ENCODE measurements at regions of chr11 and their contacts with region 1.

Region 1: GRCh38 chr11:61102667-61103571 is 630 bp downstream of the CD5 start:
- DNase-seq: no peak
- ATAC-seq: peak; percentile 27
- H3K4me3 Mint-ChIP-seq: no peak overlapping the region
- H3K27ac Mint-ChIP-seq: no peak overlapping the region
- H3K4me1 Mint-ChIP-seq: peaks cover 37% of the 10 kb centered on the region
- H3K27me3 Mint-ChIP-seq: no peaks in the 10 kb centered on the region

Region 2: GRCh38 chr11:61091373-61092279 is 11.3 kb before region 1 on chr11:
- POLR2A ChIA-PET with region 1: interaction called, 23 read pairs
- DNase-seq: peak; percentile 49
- ATAC-seq: peak; percentile 46
- H3K4me3 Mint-ChIP-seq: peak overlapping the region; percentile 84
- H3K27ac Mint-ChIP-seq: peak overlapping the region; percentile 94
- H3K4me1 Mint-ChIP-seq: peaks cover 62% of the 10 kb centered on the region
- H3K27me3 Mint-ChIP-seq: no peaks in the 10 kb centered on the region

Region 3: DNA sequence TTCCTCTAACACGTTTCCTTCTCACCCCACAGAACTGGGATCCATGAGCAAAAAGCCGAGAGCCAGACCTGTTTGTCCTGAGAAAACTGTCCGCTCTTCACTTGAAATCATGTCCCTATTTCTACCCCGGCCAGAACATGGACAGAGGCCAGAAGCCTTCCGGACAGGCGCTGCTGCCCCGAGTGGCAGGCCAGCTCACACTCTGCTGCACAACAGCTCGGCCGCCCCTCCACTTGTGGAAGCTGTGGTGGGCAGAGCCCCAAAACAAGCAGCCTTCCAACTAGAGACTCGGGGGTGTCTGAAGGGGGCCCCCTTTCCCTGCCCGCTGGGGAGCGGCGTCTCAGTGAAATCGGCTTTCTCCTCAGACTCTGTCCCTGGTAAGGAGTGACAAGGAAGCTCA is 23.3 kb after region 1 on chr11:
- POLR2A ChIA-PET with region 1: no interaction called
- DNase-seq: no peak
- ATAC-seq: no peak
- H3K4me3 Mint-ChIP-seq: no peak overlapping the region
- H3K27ac Mint-ChIP-seq: no peak overlapping the region
- H3K4me1 Mint-ChIP-seq: peaks cover 37% of the 10 kb centered on the region
- H3K27me3 Mint-ChIP-seq: no peaks in the 10 kb centered on the region

Region 4: DNA sequence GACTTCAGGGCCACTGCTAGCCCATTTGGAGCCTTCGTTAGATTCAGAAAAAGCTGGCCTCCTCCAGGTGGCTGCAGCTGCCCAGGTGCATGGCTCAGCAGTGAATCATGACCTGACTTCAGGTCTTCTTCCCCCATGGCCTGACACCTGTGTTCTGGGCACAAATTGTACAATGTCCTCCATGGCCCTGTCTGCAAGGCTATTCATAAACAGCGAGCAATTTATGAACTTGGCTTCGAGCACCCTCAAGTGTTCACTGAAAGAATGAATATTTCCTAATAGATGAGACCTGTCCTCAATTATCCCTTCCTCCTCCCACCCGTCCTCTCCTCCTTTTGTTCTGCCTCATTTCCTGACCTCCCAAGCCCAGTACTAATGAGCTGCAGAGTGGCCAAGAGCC is 70.5 kb after region 1 on chr11:
- POLR2A ChIA-PET with region 1: no interaction called
- DNase-seq: no peak
- ATAC-seq: no peak
- H3K4me3 Mint-ChIP-seq: no peak overlapping the region
- H3K27ac Mint-ChIP-seq: no peak overlapping the region
- H3K4me1 Mint-ChIP-seq: peaks cover 12% of the 10 kb centered on the region
- H3K27me3 Mint-ChIP-seq: peaks cover 3% of the 10 kb centered on the region

Measured in activated naive CD8-positive, alpha-beta T cell treated with anti-CD3 and anti-CD28 coated beads, Interleukin-2, amount 10 ng/mL, durations not matched to agents 7 days and 5 days (primary cell).